ENCODE measurements at regions of chr6 and their contacts with region 1.

Region 1: DNA sequence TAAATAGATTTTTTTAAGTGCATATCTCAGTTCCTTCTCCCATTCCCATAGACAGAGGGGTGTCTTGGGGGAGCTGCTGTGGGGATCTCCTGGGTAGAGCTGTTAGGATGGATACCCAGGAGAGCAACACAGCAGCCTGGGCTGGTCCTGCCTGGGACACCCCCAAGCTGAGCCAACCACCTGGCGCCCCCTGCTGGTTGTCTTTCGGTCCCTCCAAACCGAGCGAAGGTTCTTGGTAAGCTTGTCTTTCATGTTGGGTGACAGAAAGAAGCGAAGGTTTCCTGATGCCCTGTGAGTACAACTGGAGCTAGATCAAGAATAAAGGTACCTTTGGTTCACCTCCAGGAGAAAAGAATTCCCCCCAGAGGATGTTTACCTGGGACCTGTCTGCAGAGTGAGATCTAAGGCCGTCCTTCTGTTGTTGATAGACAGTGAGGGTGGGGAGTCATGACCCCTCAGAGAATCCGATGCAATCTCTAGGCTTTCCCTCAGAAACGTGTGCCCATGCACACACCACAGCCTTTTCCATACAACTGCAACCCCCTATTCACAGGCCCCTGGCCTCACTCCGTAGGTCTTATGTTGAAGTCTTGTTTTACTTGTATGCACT is 50.8 kb downstream of the SNX9 start:
- DNase-seq: peak; percentile 71 to 83
- H3K4me3 ChIP-seq: no peak overlapping the region
- H3K4me3 Mint-ChIP-seq: no peak overlapping the region
- H3K27ac Mint-ChIP-seq: no peak overlapping the region
- H3K4me1 ChIP-seq: no peaks in the 10 kb centered on the region
- H3K4me1 Mint-ChIP-seq: no peaks in the 10 kb centered on the region
- H3K27me3 ChIP-seq: no peaks in the 10 kb centered on the region
- H3K27me3 Mint-ChIP-seq: no peaks in the 10 kb centered on the region
- CTCF ChIP-seq: peak; percentile 79 to 85

Region 2: DNA sequence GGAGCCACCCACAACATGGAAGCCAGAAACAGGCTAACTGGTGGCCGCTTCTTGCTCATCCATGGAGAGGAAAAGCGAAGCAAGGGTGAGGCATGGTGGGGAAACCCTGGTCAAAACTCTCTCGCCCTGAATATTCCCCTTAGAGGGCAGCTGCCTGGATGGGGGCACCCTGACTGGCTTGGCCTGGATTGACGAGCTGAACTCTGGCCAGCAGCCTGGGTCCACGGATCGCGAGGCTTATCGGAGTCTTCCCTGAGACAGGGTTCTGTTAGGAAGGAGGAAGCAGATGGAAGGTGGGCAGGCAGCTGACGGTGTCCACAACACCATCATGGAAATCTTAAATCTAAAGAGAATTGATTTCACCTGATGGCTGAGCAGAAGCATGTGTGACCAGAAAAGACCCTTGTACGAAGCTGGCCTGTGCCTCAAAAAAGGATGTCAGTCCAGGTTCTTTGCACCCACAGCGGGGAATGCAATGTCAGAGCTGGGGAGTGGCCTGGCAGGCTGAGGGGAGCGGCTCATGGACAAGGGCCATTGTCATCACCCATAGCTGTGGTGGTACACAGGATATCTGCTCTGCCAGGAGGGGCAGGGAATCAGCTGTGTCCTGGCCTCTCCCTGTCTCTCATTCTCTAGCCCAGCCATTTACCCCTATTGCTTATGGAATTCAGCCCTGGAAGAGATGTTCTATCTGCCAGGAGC is 160.2 kb before region 1 on chr6:
- CTCF ChIA-PET with region 1: interaction called, 5 read pairs
- POLR2A ChIA-PET with region 1: no interaction called
- intact Hi-C with region 1: loop called (anchors 1 kb)
- DNase-seq: no peak
- H3K4me3 ChIP-seq: no peak overlapping the region
- H3K4me3 Mint-ChIP-seq: no peak overlapping the region
- H3K27ac Mint-ChIP-seq: no peak overlapping the region
- H3K4me1 ChIP-seq: no peaks in the 10 kb centered on the region
- H3K4me1 Mint-ChIP-seq: peaks cover 18% of the 10 kb centered on the region
- H3K27me3 ChIP-seq: no peaks in the 10 kb centered on the region
- H3K27me3 Mint-ChIP-seq: no peaks in the 10 kb centered on the region
- CTCF ChIP-seq: no peak

Region 3: GRCh38 chr6:157756708-157757429 is 117.0 kb before region 1 on chr6:
- CTCF ChIA-PET with region 1: interaction called, 8 read pairs
- POLR2A ChIA-PET with region 1: no interaction called
- intact Hi-C with region 1: loop called (anchors 1 kb)
- DNase-seq: peak; percentile 69 to 75
- H3K4me3 ChIP-seq: no peak overlapping the region
- H3K4me3 Mint-ChIP-seq: no peak overlapping the region
- H3K27ac Mint-ChIP-seq: no peak overlapping the region
- H3K4me1 ChIP-seq: peaks cover 21% of the 10 kb centered on the region
- H3K4me1 Mint-ChIP-seq: peaks cover 48% of the 10 kb centered on the region
- H3K27me3 ChIP-seq: no peaks in the 10 kb centered on the region
- H3K27me3 Mint-ChIP-seq: no peaks in the 10 kb centered on the region
- CTCF ChIP-seq: peak; percentile 73 to 75

Region 4: DNA sequence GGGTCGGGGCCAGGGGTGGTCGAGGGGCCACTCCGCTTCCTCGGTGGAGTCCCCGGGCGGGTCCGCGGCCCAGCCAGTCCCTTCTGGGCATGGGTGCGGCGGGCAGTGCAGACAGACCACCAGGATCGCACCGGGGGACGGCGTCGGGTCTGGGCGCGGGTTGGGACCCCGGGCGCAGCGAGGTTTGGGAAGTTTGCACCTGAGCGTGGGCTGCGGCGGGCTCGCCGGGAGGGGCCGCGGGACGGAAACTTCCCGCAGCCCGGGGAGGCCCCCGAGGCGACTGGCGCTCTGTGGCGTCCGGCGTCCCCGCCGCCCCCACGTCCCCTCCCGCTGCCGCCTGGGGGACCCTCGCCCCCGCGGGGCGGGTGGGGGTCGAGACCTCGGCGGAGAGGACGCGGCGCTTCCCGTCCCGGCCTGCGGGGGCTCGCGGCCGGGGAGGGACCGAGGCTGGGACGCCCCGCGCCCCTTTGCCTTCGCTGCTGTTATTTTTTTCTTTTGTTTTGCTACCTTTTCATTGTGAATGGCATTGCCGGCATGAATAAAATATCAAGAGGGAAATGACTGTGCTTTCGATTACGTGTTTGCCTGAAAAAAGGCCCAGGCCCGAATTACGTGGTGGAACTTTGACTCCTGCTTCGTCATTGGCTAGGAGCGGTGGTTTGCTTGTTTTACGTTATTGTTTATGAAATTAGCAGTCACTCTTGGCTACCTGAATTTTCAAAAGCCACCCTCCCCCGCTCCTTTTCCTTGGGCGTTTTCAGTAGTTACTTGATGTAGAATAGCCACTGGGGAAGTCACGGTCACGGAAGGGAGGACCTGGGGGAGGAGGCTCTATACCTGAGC is 50.1 kb before region 1 on chr6:
- CTCF ChIA-PET with region 1: no interaction called
- POLR2A ChIA-PET with region 1: no interaction called
- intact Hi-C with region 1: loop called (anchors 2 kb)
- DNase-seq: peak; percentile 33 to 49
- H3K4me3 ChIP-seq: peak overlapping the region; percentile 92
- H3K4me3 Mint-ChIP-seq: peak overlapping the region; percentile 93
- H3K27ac Mint-ChIP-seq: peak overlapping the region; percentile 93
- H3K4me1 ChIP-seq: peaks cover 22% of the 10 kb centered on the region
- H3K4me1 Mint-ChIP-seq: peaks cover 9% of the 10 kb centered on the region
- H3K27me3 ChIP-seq: no peaks in the 10 kb centered on the region
- H3K27me3 Mint-ChIP-seq: no peaks in the 10 kb centered on the region
- CTCF ChIP-seq: peak in 1 of 2 experiments; percentile 19

Region 5: GRCh38 chr6:157980288-157981131 is 106.7 kb after region 1 on chr6:
- CTCF ChIA-PET with region 1: no interaction called
- POLR2A ChIA-PET with region 1: no interaction called
- intact Hi-C with region 1: no loop called
- DNase-seq: no peak
- H3K4me3 ChIP-seq: no peak overlapping the region
- H3K4me3 Mint-ChIP-seq: peak overlapping the region; percentile 74
- H3K27ac Mint-ChIP-seq: peak overlapping the region; percentile 25
- H3K4me1 ChIP-seq: peaks cover 44% of the 10 kb centered on the region
- H3K4me1 Mint-ChIP-seq: peaks cover 8% of the 10 kb centered on the region
- H3K27me3 ChIP-seq: no peaks in the 10 kb centered on the region
- H3K27me3 Mint-ChIP-seq: no peaks in the 10 kb centered on the region
- CTCF ChIP-seq: no peak

Measured in Caco-2 (cell line).